CD4-positive, alpha-beta T cell (primary cell): ENCODE measurements at regions of chr9 and their contacts with region 1.

Region 1: GRCh38 chr9:21638104-21638503 is 156.0 kb upstream of the IFNE start:
- DNase-seq: no peak
- ATAC-seq: no peak
- H3K4me3 ChIP-seq: no peak overlapping the region
- H3K4me3 Mint-ChIP-seq: no peak overlapping the region
- H3K27ac ChIP-seq: no peak overlapping the region
- H3K27ac Mint-ChIP-seq: no peak overlapping the region
- H3K4me1 ChIP-seq: no peaks in the 10 kb centered on the region
- H3K4me1 Mint-ChIP-seq: no peaks in the 10 kb centered on the region
- H3K27me3 ChIP-seq: no peaks in the 10 kb centered on the region
- H3K27me3 Mint-ChIP-seq: no peaks in the 10 kb centered on the region
- CTCF ChIP-seq: no peak

Region 2: DNA sequence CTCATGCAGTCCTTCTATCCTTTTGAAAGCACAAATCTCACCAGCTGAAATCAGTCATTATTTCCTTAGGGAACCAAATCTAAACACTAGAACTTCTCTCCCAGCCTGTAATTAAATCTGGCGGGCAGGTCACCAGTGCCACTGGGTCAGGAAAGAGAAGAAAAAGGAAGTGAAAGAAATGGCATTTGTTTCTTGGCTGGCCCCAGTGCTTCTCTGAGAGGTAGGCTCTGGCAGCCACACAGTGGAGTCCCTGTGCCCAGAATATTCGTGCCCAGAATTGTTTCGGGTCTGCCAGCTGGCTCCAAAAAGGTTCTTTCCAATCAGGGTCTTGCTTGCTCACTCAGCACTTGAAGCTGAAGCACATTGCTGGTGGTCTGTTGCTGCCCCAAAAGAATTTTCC is 30.4 kb after region 1 on chr9:
- CTCF ChIA-PET with region 1: interaction called, 3 read pairs
- POLR2A ChIA-PET with region 1: no interaction called
- intact Hi-C with region 1: loop called in 1 of 2 experiments (anchors 1 kb)
- DNase-seq: no peak
- ATAC-seq: no peak
- H3K4me3 ChIP-seq: no peak overlapping the region
- H3K4me3 Mint-ChIP-seq: no peak overlapping the region
- H3K27ac ChIP-seq: no peak overlapping the region
- H3K27ac Mint-ChIP-seq: no peak overlapping the region
- H3K4me1 ChIP-seq: peaks cover 6% of the 10 kb centered on the region
- H3K4me1 Mint-ChIP-seq: peaks cover 6% of the 10 kb centered on the region
- H3K27me3 ChIP-seq: no peaks in the 10 kb centered on the region
- H3K27me3 Mint-ChIP-seq: no peaks in the 10 kb centered on the region
- CTCF ChIP-seq: no peak

Region 3: DNA sequence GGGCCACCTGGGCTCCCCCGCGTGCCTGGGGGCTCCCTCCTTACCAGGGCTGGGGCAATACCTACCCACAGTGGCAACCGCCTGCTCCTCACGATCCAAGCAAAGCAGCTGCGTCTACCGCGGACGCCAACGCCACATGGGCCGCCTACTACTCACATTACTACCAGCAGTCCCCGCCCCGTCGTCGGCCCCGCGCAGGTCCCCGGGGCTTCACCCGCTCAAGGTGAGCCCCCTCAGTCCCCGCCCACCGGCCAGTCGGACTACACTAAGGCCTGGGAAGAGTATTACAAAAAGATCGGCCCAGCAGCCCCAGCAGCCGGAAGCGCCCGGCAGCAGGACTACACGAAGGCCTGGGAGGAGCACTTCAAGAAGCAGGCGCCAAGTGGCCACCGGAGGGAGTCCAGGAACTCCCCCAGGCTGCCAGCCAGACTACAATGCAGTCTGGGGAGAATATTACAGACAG is 58.3 kb after region 1 on chr9:
- CTCF ChIA-PET with region 1: no interaction called
- POLR2A ChIA-PET with region 1: no interaction called
- intact Hi-C with region 1: no loop called
- DNase-seq: no peak
- ATAC-seq: no peak
- H3K4me3 ChIP-seq: no peak overlapping the region
- H3K4me3 Mint-ChIP-seq: no peak overlapping the region
- H3K27ac ChIP-seq: no peak overlapping the region
- H3K27ac Mint-ChIP-seq: no peak overlapping the region
- H3K4me1 ChIP-seq: no peaks in the 10 kb centered on the region
- H3K4me1 Mint-ChIP-seq: no peaks in the 10 kb centered on the region
- H3K27me3 ChIP-seq: no peaks in the 10 kb centered on the region
- H3K27me3 Mint-ChIP-seq: no peaks in the 10 kb centered on the region
- CTCF ChIP-seq: no peak